ENCODE measurements at regions of chr11 and their contacts with region 1.

Region 1: GRCh38 chr11:67630228-67630942 is 648 bp upstream of the NUDT8 start:
- DNase-seq: peak; percentile 99
- H3K4me3 ChIP-seq: peak overlapping the region; percentile 63 to 78 (median 68)
- H3K27ac ChIP-seq: peak overlapping the region; percentile 95 to 98 (median 97)
- H3K4me1 ChIP-seq: peaks cover 0 to 29% (median 19%) of the 10 kb centered on the region in 4 donors
- H3K27me3 ChIP-seq: peaks cover 0 to 5% (median 0%) of the 10 kb centered on the region in 3 donors
- CTCF ChIP-seq: peak; percentile 60 to 80 (median 68)
- EP300 ChIP-seq: no peak
- POLR2A ChIP-seq: peak in 1 of 2 donors; percentile 64

Region 2: GRCh38 chr11:67317205-67317887 is 313.0 kb before region 1 on chr11:
- intact Hi-C with region 1: no loop called
- DNase-seq: peak; percentile 97
- H3K4me3 ChIP-seq: peak overlapping the region; percentile 53 to 80 (median 72)
- H3K27ac ChIP-seq: peak overlapping the region; percentile 85 to 98 (median 90)
- H3K4me1 ChIP-seq: peaks cover 0 to 34% (median 26%) of the 10 kb centered on the region in 4 donors
- H3K27me3 ChIP-seq: no peaks in the 10 kb centered on the region
- CTCF ChIP-seq: peak; percentile 94 to 100 (median 98)
- EP300 ChIP-seq: no peak
- POLR2A ChIP-seq: peak in 1 of 2 donors; percentile 83

Region 3: DNA sequence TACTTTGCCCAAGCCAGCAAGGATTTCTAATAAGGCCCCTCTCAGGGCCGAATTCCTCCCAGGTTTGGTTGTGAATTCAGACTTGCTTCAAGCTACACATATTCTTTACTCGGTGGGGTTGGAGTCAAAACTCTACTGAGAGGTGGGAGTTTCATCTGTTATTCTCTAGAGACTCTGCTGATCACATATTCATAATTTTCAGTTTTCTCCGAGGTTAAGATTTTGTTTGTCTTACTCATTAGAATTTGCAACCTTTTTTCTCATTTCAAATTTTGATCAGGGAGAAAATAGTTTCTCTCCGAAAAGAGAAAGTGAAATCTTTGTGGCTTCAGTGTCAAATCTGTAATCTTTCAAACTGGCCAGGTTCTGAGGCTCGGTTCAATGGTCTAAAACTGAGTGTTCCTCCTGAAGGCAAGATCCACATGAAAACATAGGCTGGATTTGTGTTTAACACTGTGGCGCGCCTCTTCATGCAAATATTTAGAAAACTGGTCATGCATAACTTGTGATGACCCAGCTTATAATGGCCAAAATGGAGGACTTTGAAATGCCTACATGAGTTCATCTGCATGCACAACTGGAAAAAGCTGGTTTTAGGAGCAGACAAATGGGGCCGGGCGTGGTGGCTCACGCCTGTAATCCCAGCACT is 68.3 kb before region 1 on chr11:
- intact Hi-C with region 1: no loop called
- DNase-seq: no peak
- H3K4me3 ChIP-seq: no peak overlapping the region
- H3K27ac ChIP-seq: no peak overlapping the region
- H3K4me1 ChIP-seq: peaks cover 0 to 18% (median 7%) of the 10 kb centered on the region in 4 donors
- H3K27me3 ChIP-seq: peaks cover 0 to 6% (median 0%) of the 10 kb centered on the region in 3 donors
- CTCF ChIP-seq: no peak
- EP300 ChIP-seq: no peak
- POLR2A ChIP-seq: no peak

Region 4: DNA sequence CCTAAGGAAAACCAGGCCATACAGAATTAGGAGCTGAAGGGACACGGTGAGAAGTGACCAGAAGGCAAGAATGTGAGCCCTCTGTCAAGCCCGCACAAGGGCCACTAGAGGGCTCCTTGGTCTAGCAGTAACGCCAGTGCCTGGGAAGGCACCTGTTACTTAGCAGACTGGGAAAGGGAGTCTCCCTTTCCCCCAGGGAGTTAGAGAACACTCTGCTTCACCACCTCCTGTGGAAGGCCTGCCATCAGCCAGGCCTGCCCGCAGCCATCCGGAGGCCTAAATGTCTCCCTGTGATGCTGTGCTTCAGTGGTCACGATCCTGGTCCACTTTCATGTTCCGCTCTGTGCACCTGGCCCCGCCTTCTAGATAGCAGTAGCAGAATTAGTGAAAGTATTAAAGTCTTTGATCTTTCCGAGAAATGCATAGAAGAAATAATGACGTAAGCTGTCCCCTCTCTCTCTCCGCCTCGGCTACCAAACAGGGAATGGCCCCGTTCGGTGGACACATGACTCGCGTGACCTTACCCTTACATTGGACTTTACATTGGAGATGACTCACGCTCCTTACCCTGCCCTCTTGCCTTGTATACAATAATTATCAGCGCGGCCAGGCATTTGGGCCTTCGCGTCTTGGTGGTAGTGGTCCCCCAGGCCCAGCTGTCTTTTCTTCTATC is 57.5 kb before region 1 on chr11:
- intact Hi-C with region 1: no loop called
- DNase-seq: peak; percentile 82
- H3K4me3 ChIP-seq: no peak overlapping the region
- H3K27ac ChIP-seq: no peak overlapping the region
- H3K4me1 ChIP-seq: no peaks in the 10 kb centered on the region
- H3K27me3 ChIP-seq: peaks cover 0 to 6% (median 0%) of the 10 kb centered on the region in 3 donors
- CTCF ChIP-seq: peak; percentile 52 to 71 (median 55)
- EP300 ChIP-seq: no peak
- POLR2A ChIP-seq: no peak

Region 5: DNA sequence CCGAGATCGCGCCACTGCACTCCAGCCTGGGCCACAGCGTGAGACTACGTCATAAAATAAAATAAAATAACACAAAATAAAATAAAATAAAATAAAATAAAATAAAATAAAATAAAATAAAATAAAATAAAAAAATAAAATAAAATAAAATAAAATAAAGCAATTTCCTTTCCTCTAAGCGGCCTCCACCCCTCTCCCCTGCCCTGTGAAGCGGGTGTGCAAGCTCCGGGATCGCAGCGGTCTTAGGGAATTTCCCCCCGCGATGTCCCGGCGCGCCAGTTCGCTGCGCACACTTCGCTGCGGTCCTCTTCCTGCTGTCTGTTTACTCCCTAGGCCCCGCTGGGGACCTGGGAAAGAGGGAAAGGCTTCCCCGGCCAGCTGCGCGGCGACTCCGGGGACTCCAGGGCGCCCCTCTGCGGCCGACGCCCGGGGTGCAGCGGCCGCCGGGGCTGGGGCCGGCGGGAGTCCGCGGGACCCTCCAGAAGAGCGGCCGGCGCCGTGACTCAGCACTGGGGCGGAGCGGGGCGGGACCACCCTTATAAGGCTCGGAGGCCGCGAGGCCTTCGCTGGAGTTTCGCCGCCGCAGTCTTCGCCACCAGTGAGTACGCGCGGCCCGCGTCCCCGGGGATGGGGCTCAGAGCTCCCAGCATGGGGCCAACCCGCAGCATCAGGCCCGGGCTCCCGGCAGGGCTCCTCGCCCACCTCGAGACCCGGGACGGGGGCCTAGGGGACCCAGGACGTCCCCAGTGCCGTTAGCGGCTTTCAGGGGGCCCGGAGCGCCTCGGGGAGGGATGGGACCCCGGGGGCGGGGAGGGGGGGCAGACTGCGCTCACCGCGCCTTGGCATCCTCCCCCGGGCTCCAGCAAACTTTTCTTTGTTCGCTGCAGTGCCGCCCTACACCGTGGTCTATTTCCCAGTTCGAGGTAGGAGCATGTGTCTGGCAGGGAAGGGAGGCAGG is 46.9 kb before region 1 on chr11 and contains the start of gene GSTP1:
- intact Hi-C with region 1: loop called (anchors 2 kb)
- DNase-seq: peak; percentile 97
- H3K4me3 ChIP-seq: peak within 1 kb of the TSS; percentile 74 to 96 (median 80)
- H3K27ac ChIP-seq: peak within 1 kb of the TSS; percentile 95 to 99 (median 97)
- H3K4me1 ChIP-seq: peaks cover 0 to 25% (median 16%) of the 10 kb centered on the region in 4 donors
- H3K27me3 ChIP-seq: no peaks in the 10 kb centered on the region
- CTCF ChIP-seq: peak in 3 of 4 experiments; percentile 39 to 80 (median 51)
- EP300 ChIP-seq: peak in 1 of 4 donors; percentile 23
- POLR2A ChIP-seq: peak; percentile 91 to 92
- total RNA-seq, gene GSTP1: 349 to 702 (median 499) TPM

Measured in sigmoid colon (tissue), 7 donors.